ENCODE measurements at regions of chr22 and their contacts with region 1.

Region 1: DNA sequence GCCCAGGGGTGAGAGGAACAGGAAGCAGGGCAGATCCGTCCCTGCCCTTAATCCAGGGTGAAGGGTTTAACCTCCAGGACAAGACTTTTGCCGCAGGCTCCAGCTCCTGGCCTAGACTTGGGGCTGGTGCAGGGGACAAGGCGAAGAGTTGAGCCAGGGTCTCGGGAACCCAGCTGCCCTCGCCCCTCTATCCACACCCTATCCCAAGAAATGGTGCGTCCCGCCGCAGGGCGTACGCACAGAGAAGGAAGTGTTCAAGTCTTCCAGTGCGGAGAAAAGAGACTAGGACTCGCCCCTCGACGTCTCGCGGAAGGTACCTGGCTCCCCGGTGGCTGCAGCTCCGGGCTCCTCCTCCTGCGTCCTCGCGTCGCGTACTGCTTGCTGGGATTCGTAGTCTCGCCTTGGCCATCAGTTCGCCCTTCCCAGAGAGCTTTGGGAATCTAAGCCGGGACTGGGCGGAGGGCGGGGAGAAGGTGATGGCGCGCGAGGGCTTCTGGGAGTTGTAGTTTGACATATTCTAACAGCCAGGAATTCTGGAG is at the start of gene ZMAT5:
- DNase-seq: peak; percentile 80 to 90 (median 88)
- H3K4me3 ChIP-seq: peak within 1 kb of the TSS; percentile 92 to 97 (median 96)
- H3K4me3 Mint-ChIP-seq: peak within 1 kb of the TSS; percentile 99
- H3K27ac ChIP-seq: peak within 1 kb of the TSS; percentile 37 to 92
- H3K27ac Mint-ChIP-seq: peak within 1 kb of the TSS; percentile 91 to 98 (median 96)
- H3K4me1 ChIP-seq: peaks cover 21 to 27% of the 10 kb centered on the region in 2 donors
- H3K4me1 Mint-ChIP-seq: peaks cover 33% of the 10 kb centered on the region
- H3K27me3 ChIP-seq: no peaks in the 10 kb centered on the region
- H3K27me3 Mint-ChIP-seq: peaks cover 0 to 1% (median 0%) of the 10 kb centered on the region in 3 donors
- CTCF ChIP-seq: no peak
- polyA plus RNA-seq, gene ZMAT5: 27.1 to 79.4 (median 59.3) TPM

Region 2: DNA sequence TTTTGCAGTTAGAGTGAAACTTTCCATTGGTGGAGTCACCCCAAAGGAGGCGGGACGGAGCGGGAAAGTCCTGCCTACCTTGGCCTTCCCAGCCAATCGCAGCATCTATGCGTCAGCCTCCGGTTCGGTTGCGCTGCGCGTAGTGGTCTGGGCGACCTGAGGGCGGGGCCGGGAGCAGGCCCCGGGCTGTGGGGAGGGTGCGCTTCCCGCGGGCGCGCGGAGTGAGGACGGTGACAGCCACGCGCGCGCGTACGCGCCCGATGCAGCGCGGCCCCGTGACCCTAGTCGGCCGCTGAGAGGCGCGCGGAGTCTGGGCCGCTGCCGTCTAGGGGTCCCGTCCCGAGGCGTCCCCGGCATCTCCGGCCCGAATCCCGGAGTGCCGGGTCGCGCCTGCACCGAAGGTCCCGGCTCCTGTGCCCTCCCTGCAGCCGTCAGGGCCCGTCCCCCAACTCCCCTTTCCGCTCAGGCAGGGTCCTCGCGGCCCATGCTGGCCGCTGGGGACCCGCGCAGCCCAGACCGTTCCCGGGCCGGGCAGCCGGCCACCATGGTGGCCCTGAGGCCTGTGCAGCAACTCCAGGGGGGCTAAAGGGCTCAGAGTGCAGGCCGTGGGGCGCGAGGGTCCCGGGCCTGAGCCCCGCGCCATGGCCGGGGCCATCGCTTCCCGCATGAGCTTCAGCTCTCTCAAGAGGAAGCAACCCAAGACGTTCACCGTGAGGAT is 163.2 kb before region 1 on chr22 and contains the start of gene NF2:
- intact Hi-C with region 1: loop called in 1 of 2 experiments (anchors 5 kb)
- DNase-seq: peak; percentile 99
- H3K4me3 ChIP-seq: peak within 1 kb of the TSS; percentile 56 to 91 (median 80)
- H3K4me3 Mint-ChIP-seq: peak within 1 kb of the TSS; percentile 86 to 97
- H3K27ac ChIP-seq: peak within 1 kb of the TSS; percentile 83 to 96
- H3K27ac Mint-ChIP-seq: peak within 1 kb of the TSS; percentile 87 to 96 (median 96)
- H3K4me1 ChIP-seq: peaks cover 17 to 18% of the 10 kb centered on the region in 2 donors
- H3K4me1 Mint-ChIP-seq: peaks cover 22% of the 10 kb centered on the region
- H3K27me3 ChIP-seq: no peaks in the 10 kb centered on the region
- H3K27me3 Mint-ChIP-seq: peaks cover 0 to 2% (median 2%) of the 10 kb centered on the region in 3 donors
- CTCF ChIP-seq: no peak
- polyA plus RNA-seq, gene NF2: 7.7 to 15.5 (median 8.4) TPM

Region 3: DNA sequence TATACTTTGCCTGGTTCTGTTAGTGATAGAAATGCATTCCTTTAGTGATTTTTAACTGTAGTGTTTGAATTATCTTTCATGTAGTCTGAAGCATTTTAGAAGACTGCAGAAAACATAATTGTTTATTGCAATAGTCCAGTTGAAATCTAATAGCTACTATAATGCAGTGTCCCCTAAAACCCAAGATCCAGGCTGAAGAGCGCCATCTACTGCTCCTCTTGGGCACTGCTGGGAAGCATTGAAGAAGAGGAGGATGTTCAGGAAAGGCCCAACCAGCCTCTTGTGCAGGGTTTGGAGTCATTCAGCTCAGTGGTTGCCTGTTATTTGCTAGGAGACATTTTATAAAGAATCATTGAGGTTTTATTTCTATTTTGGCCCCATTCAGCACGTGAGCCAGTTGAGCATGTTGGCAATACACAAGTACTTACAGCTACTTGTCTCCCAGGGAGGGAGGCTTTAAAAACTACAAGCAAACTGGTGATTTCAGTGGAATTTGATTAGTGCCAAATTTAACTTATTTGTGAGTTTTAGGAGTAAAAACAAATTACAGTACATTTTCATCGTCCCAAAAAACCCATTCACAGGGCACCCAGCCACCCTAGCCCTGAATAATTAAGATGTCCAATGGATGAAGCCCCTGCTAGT is 238.6 kb after region 1 on chr22:
- intact Hi-C with region 1: loop called in 1 of 2 experiments (anchors 10 kb)
- DNase-seq: peak; percentile 39 to 60 (median 53)
- H3K4me3 ChIP-seq: no peak overlapping the region
- H3K4me3 Mint-ChIP-seq: no peak overlapping the region
- H3K27ac ChIP-seq: no peak overlapping the region
- H3K27ac Mint-ChIP-seq: peak overlapping the region in 1 of 7 donors; percentile 56
- H3K4me1 ChIP-seq: no peaks in the 10 kb centered on the region
- H3K4me1 Mint-ChIP-seq: no peaks in the 10 kb centered on the region
- H3K27me3 ChIP-seq: no peaks in the 10 kb centered on the region
- H3K27me3 Mint-ChIP-seq: no peaks in the 10 kb centered on the region
- CTCF ChIP-seq: peak; percentile 97

Region 4: GRCh38 chr22:30038219-30038618 is 271.5 kb after region 1 on chr22:
- intact Hi-C with region 1: no loop called
- DNase-seq: no peak
- H3K4me3 ChIP-seq: no peak overlapping the region
- H3K4me3 Mint-ChIP-seq: no peak overlapping the region
- H3K27ac ChIP-seq: no peak overlapping the region
- H3K27ac Mint-ChIP-seq: no peak overlapping the region
- H3K4me1 ChIP-seq: peaks cover 18 to 19% of the 10 kb centered on the region in 2 donors
- H3K4me1 Mint-ChIP-seq: peaks cover 23% of the 10 kb centered on the region
- H3K27me3 ChIP-seq: no peaks in the 10 kb centered on the region
- H3K27me3 Mint-ChIP-seq: peaks cover 0 to 5% (median 1%) of the 10 kb centered on the region in 3 donors
- CTCF ChIP-seq: no peak

Region 5: DNA sequence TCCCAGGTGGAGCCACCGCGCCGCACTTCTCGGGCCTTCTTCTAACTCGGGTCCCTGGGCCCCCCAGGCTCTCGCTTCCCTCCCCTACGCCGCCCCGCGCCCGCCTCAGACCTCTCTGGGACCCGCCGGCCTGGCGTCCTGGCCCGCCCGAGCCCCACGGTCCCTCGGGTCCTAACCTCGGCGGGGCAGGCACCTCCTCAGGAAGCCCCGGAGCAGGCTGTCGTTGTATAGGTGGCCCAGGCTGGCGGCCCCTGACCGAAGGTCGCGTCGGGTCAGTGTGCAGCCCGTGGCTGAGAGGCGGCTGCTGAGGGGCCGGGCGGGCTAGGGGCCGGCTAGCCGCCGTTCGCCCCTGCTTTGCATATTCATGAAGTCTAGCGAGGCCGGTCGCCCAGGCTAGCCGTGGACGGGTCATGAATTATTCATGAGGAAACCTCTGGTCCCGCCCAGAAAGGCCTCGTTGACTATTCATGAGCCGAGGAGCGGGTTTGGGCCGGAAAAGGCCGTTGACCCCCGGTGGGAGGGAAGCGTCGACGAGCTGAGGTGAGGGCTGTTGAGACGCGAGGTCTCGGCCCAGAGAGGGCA is 313.3 kb after region 1 on chr22 and contains the start of gene HORMAD2:
- intact Hi-C with region 1: no loop called
- DNase-seq: peak; percentile 4 to 23 (median 11)
- H3K4me3 ChIP-seq: peak within 1 kb of the TSS in 1 of 3 experiments; percentile 50
- H3K4me3 Mint-ChIP-seq: peak within 1 kb of the TSS; percentile 71 to 83
- H3K27ac ChIP-seq: no peak within 1 kb of the TSS
- H3K27ac Mint-ChIP-seq: peak within 1 kb of the TSS in 1 of 7 donors; percentile 30
- H3K4me1 ChIP-seq: peaks cover 6 to 7% of the 10 kb centered on the region in 2 donors
- H3K4me1 Mint-ChIP-seq: peaks cover 5% of the 10 kb centered on the region
- H3K27me3 ChIP-seq: peaks cover 5 to 30% of the 10 kb centered on the region in 2 donors
- H3K27me3 Mint-ChIP-seq: peaks cover 18 to 41% (median 18%) of the 10 kb centered on the region in 3 donors
- CTCF ChIP-seq: no peak
- polyA plus RNA-seq, gene HORMAD2: not detected

Measured in CD14-positive monocyte (primary cell).